GM10248 (cell line): ENCODE measurements at regions of chr6 and their contacts with region 1.

Region 1: GRCh38 chr6:30130887-30131862 is 4.8 kb upstream of the TRIM40 start:
- DNase-seq: peak; percentile 85
- CTCF ChIP-seq: peak; percentile 99

Region 2: DNA sequence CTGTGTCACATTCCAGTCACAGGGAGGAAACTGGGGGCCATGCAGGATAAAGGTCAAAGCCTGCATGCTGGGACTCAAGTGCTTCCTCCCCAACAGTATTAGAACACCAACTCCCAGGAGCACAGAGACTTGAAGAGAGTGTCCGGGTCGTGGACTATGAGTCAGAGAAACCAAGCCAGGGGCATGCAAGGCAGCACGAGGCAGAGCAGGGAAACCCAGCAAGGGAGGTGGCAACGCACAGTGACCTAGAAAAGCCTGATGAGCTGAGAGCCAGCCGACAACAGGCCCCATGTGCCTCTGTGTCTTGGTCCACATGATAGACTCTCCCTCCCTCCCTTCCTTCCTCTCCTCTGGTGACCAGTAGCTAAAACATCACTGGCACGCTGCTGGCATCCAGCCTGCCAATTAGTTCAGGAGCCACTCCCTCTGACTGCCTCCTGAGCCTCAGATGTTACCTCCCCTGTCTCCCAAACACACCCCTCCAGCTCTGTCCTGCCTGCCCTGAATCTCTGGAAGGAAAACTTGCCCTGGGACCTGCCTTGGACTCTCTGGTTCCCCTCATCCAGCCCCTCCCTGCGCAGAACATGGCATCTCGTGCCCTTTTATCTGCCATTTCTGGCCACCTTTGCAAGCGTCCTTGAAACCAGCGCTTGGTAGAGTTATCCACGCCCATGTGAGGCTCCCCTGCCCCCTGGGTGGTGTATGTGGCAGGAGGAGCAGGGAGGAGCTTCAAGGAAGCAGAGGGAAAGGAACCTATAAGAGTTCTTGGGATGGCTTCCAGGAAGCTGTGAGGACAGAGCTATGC is 39.4 kb before region 1 on chr6:
- CTCF ChIA-PET with region 1: interaction called, 19 read pairs
- POLR2A ChIA-PET with region 1: no interaction called
- DNase-seq: no peak
- CTCF ChIP-seq: no peak

Region 3: DNA sequence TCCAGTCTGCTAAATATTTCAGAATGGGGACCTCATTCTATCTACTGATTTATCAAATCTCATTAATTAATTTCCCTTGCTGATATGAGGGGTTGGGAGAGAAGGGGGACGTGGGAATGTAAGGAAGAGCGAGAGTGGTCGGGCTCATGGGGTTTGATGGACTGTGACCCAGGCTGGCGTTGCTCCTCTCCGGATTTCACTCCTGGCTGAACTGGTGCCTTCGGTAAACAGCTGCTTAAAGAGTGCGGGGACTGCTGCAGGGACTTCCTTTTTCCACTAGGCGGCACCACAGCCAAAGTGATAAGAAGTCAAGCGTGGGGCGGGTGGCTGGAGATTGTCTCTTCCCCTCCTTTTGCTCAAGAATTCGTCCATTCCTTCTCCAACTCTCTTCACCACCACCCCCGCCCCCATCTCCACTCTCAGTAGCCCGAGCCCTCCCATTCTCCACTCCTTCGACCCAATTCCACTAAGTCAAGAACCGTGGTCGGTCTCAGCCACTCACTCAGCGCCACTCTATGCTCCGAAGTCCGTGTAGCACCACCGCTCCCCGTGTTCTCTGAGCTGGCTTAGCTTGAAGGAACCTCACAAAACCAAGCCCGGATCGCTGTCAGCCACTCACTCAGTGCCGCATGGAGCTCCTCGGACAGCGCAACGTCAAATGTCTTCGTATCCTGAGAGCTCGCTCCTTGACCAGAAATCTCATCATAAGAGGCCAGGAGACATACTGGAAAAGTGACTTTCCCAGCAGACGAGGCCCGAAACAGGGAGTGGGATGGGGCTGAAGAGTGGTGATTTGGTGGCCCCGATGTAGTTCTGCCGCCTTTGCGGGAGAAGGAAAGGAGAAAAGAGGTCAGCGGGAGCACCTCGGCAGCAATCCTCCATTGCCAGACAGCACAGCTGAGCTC is 28.0 kb before region 1 on chr6:
- CTCF ChIA-PET with region 1: interaction called, 313 read pairs
- POLR2A ChIA-PET with region 1: interaction called, 3 read pairs
- DNase-seq: peak; percentile 89
- CTCF ChIP-seq: peak; percentile 98

Region 4: GRCh38 chr6:30147062-30147461 is 15.9 kb after region 1 on chr6:
- CTCF ChIA-PET with region 1: interaction called, 67 read pairs
- POLR2A ChIA-PET with region 1: no interaction called
- DNase-seq: no peak
- CTCF ChIP-seq: no peak

Region 5: GRCh38 chr6:30169658-30170614 is 38.8 kb after region 1 on chr6:
- CTCF ChIA-PET with region 1: interaction called, 11 read pairs
- POLR2A ChIA-PET with region 1: no interaction called
- DNase-seq: peak; percentile 66
- CTCF ChIP-seq: peak; percentile 64